Right ventricle myocardium inferior (tissue), 1 donor: ENCODE measurements at regions of chr1 and their contacts with region 1.

Region 1: DNA sequence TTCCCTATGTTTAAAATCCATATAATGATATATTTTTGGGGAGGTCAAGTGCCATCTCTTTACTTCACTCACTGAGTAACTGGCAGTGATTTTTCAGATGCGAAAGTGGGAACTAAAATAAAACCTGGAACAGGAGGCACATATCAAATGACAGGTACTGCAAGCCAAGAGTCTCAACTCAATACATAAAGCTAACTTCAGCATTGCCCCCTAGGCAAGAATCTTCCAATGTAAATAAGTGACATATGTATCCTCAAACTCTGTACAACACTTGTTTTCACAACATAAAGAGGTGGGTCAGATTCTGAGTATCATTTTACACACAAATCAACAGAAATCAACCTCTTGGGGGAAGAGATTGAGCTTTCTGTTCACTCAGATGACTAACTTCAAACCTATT is 18.1 kb downstream of the DCAF8 start:
- DNase-seq: no peak
- ATAC-seq: no peak

Region 2: DNA sequence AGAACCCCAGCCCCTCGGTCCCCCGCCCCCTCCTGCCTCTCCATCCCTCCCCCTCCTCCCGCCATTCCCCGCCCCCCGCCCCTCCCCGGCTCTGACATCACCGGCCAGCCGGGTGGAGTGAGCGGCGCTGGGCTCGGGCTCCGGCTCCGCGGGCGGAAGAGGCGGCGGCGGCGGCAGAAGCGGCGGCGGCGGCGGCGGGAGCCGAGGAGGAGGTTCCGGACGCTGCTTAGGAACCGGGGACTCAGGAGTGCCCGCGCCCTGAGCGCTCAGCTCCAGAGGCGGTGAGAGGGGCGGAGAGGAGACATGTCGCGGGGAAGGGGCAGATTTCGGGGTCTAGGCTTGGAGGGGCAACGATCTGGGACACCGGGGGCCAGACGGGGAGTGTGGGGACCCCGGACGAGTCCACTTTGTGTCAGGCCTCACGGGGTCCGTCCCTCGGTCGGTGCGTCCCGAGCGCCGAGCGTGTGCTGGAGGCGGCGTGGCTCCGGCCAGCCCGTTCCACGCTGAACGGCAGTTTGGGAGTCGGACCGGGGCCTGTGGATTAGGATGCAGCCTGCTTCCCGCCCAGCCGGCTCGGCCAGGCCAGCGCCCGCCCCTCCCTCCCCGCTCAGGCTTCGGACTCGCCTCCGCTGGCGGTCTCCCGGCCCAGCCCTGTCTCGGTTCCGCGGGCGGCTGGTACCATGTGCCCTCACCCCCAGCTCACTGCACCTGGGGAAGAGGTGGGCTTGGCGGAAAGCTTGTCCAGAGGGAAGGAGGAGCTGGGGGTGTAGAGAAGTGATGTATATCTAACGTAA is 38.8 kb before region 1 on chr1 and contains the start of gene PEA15:
- intact Hi-C with region 1: loop called (anchors 5 kb)
- DNase-seq: peak; percentile 86
- ATAC-seq: peak; percentile 88
- total RNA-seq, gene PEA15: 283 TPM

Region 3: DNA sequence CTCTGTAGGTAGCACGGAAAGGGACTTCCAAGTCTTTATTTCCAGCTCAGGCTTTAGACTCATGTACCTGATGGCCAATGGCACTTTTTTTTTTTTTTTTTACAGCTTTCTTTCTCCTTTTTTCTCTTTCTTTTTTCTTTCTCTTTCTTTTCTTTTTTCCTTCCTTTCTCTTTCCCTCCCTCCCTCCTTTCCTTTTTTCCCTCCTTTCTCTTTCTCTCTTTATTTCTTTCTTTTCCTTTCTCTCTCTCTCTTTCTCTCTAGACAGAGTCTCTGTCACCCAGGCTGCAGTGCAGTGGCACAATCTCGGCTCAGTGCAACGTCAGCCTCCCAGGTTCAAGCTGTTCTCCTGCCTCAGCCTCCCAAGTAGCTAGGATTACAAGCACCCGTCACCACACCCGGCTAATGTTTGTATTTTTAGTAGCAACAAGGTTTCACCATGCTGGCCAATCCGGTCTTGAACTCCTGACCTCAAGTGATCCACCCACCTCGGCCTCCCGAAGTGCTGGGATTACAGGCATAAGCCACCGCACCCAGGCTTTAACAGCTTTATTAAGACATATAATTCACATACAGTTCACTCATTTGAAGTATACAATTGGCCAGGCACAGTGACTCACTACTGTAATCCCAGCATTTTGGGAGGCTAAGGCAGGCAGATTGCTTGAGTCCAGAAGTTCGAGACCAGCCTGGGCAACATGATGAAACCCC is 23.2 kb after region 1 on chr1:
- intact Hi-C with region 1: no loop called
- DNase-seq: no peak
- ATAC-seq: no peak